ENCODE measurements at regions of chr19 and their contacts with region 1.

Region 1: GRCh38 chr19:54281007-54281728 is at the start of gene LILRB2:
- DNase-seq: no peak
- total RNA-seq, gene LILRB2: not detected in 2 replicates

Region 2: GRCh38 chr19:54137086-54137921 is 143.9 kb before region 1 on chr19 and contains the start of gene CNOT3:
- in situ Hi-C with region 1: no loop called
- DNase-seq: peak; percentile 100
- total RNA-seq, gene CNOT3: 11.6 and 15.2 TPM in 2 replicates

Region 3: GRCh38 chr19:54209811-54210494 is 71.2 kb before region 1 on chr19:
- in situ Hi-C with region 1: loop called (anchors 10 kb)
- DNase-seq: peak; percentile 55

Region 4: DNA sequence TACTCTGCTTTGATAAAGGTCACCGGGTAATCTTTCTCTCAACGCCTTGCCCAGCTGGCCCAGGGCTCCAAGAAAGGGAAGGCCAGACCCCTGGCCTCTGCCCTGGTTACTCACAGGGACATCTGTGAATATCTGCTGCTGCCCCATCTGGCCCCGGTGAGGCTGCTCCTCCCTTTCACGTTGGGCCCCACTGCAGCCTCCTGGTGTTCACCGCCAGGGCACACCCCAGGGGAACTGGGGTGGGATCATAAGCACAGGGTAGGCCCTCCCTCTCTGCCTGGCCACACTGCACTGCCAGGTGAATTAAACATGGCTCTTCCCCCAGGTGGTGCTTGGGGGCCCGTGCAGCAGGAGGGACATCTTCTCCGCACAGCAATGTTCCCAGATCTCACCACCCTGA is 70.9 kb after region 1 on chr19:
- in situ Hi-C with region 1: loop called (anchors 5 kb)
- DNase-seq: no peak